Right cardiac atrium (tissue), 5 donors: ENCODE measurements at regions of chr1 and their contacts with region 1.

Region 1: DNA sequence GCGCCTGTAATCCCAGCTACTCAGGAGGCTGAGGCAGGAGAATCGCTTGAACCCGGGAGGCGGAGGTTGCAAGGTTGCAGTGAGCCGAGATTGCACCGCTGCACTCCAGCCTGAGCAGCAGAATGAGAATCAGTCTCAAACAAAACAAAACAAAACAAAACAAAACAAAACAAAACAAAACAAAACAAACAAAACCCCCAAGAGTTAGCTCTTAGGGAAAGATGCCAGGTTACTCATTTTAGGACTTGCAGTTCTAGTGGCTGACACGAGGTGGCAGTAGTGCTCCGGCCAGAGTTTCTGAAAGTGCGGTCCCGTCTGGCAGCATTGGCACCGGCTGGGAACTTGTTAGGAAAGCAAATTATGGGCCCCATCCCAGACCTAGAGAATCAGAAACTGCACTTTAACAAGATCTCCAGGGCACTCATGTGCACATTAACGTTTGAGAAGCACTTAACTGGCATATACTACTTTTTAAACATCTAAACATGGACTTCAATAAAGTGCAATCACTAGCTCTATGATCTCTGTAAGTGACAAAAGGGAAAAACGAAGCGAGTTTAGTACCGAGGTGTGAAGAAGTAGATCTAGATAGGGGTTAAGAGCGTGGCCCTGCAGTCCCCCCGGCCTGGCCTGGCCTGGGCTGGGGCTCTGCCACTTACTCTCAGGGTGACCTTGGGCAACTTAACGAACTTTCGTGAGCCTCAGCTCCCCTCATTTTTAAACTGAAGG is 41.9 kb upstream of the TNFRSF1B start:
- DNase-seq: peak; percentile 82 to 94 (median 90)
- ATAC-seq: peak; percentile 65 to 74
- H3K4me3 ChIP-seq: no peak overlapping the region
- H3K27ac ChIP-seq: peak overlapping the region; percentile 65
- H3K4me1 ChIP-seq: peaks cover 9% of the 10 kb centered on the region
- H3K27me3 ChIP-seq: no peaks in the 10 kb centered on the region

Region 2: GRCh38 chr1:12167493-12168429 is 42.9 kb after region 1 on chr1:
- intact Hi-C with region 1: no loop called
- DNase-seq: peak in 1 of 3 donors; percentile 64
- ATAC-seq: peak; percentile 6 to 10
- H3K4me3 ChIP-seq: peak overlapping the region; percentile 72
- H3K27ac ChIP-seq: peak overlapping the region; percentile 68
- H3K4me1 ChIP-seq: peaks cover 5% of the 10 kb centered on the region
- H3K27me3 ChIP-seq: no peaks in the 10 kb centered on the region

Region 3: GRCh38 chr1:12177999-12178441 is 53.2 kb after region 1 on chr1:
- intact Hi-C with region 1: no loop called
- DNase-seq: peak; percentile 90 to 92 (median 90)
- ATAC-seq: peak; percentile 21 to 33
- H3K4me3 ChIP-seq: no peak overlapping the region
- H3K27ac ChIP-seq: peak overlapping the region; percentile 48
- H3K4me1 ChIP-seq: peaks cover 18% of the 10 kb centered on the region
- H3K27me3 ChIP-seq: no peaks in the 10 kb centered on the region

Region 4: DNA sequence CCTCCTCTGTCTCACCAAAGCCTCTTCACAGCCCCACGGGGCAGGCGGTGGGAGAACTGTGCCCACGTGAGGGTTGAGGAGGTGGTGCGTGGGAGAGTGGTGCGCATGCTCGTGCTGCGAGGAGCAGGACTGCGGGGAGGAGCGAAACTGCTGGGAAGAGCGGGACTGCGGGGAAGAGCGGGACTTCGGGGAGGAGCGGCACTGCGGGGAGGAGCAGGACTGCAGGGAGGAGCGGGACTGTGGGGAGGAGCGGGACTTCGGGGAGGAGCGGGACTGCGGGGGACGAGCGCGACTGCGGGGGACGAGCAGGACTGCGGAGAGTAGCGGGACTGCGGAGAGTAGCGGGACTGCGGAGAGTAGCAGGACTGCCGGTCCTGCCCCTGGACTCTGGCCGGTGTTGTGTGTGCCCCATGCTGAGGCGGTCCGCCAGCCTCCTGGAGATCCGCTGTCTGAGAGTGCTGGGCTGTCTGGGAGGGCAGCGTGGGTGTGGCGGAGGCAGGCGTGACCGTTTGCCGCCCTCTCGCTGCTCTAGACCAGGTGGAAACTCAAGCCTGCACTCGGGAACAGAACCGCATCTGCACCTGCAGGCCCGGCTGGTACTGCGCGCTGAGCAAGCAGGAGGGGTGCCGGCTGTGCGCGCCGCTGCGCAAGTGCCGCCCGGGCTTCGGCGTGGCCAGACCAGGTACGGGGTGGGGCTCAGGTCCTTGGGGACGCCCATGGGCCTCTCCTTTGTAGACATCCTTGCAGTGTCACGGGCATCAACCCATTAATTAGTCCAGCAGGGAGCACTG is 66.6 kb after region 1 on chr1:
- intact Hi-C with region 1: loop called in 1 of 4 experiments (anchors 5 kb)
- DNase-seq: no peak
- ATAC-seq: no peak
- H3K4me3 ChIP-seq: no peak overlapping the region
- H3K27ac ChIP-seq: no peak overlapping the region
- H3K4me1 ChIP-seq: peaks cover 2% of the 10 kb centered on the region
- H3K27me3 ChIP-seq: no peaks in the 10 kb centered on the region

Region 5: GRCh38 chr1:12208764-12209494 is 84.1 kb after region 1 on chr1:
- intact Hi-C with region 1: loop called (anchors 1 to 2 kb)
- DNase-seq: peak; percentile 82 to 96 (median 93)
- ATAC-seq: peak; percentile 88 to 89
- H3K4me3 ChIP-seq: no peak overlapping the region
- H3K27ac ChIP-seq: no peak overlapping the region
- H3K4me1 ChIP-seq: peaks cover 2% of the 10 kb centered on the region
- H3K27me3 ChIP-seq: no peaks in the 10 kb centered on the region